Activated CD4-positive, alpha-beta T cell treated with anti-CD3 and anti-CD28 coated beads, Interleukin-2, amount 10 ng/mL, durations not matched to agents 24 days and 14 days (primary cell): ENCODE measurements at regions of chr9 and their contacts with region 1.

Region 1: GRCh38 chr9:14560194-14560593 is 133.0 kb downstream of the ZDHHC21 start:
- DNase-seq: no peak
- H3K4me3 Mint-ChIP-seq: no peak overlapping the region
- H3K27ac Mint-ChIP-seq: no peak overlapping the region
- H3K4me1 Mint-ChIP-seq: peaks cover 5% of the 10 kb centered on the region
- H3K27me3 Mint-ChIP-seq: no peaks in the 10 kb centered on the region

Region 2: DNA sequence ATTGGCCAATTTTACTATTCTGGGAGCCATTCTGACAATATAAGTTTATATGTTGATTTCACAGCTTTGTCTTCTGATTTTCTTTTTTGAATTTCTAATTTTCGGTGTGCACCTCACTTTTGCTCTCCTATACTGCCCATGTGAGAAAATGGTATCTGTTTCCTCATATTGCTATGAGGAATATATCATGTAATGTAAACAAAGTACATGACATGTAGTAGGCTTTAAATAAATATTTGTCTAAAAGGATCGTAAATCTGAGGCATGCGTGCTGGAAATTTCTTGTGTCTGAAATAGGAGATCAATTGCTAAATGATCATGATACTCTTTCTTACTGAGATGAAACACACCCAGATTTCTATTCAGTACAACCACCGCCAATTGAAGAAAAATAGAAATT is 13.1 kb after region 1 on chr9:
- intact Hi-C with region 1: no loop called
- DNase-seq: no peak
- H3K4me3 Mint-ChIP-seq: no peak overlapping the region
- H3K27ac Mint-ChIP-seq: no peak overlapping the region
- H3K4me1 Mint-ChIP-seq: no peaks in the 10 kb centered on the region
- H3K27me3 Mint-ChIP-seq: peaks cover 2% of the 10 kb centered on the region

Region 3: GRCh38 chr9:14585730-14586473 is 25.7 kb after region 1 on chr9:
- intact Hi-C with region 1: loop called (anchors 1 kb)
- DNase-seq: peak; percentile 80
- H3K4me3 Mint-ChIP-seq: no peak overlapping the region
- H3K27ac Mint-ChIP-seq: no peak overlapping the region
- H3K4me1 Mint-ChIP-seq: peaks cover 8% of the 10 kb centered on the region
- H3K27me3 Mint-ChIP-seq: peaks cover 10% of the 10 kb centered on the region

Region 4: GRCh38 chr9:14956208-14956607 is 396.0 kb after region 1 on chr9:
- intact Hi-C with region 1: no loop called
- DNase-seq: no peak
- H3K4me3 Mint-ChIP-seq: no peak overlapping the region
- H3K27ac Mint-ChIP-seq: no peak overlapping the region
- H3K4me1 Mint-ChIP-seq: peaks cover 29% of the 10 kb centered on the region
- H3K27me3 Mint-ChIP-seq: peaks cover 9% of the 10 kb centered on the region